Activated naive CD4-positive, alpha-beta T cell treated with anti-CD3 and anti-CD28 coated beads for 36 hours (primary cell): ENCODE measurements at regions of chr11 and their contacts with region 1.

Region 1: GRCh38 chr11:102416976-102417375 is 35.6 kb downstream of the TMEM123 start:
- DNase-seq: peak; percentile 38
- H3K4me3 Mint-ChIP-seq: peak overlapping the region; percentile 34
- H3K27ac Mint-ChIP-seq: peak overlapping the region; percentile 84
- H3K4me1 Mint-ChIP-seq: peaks cover 92% of the 10 kb centered on the region
- H3K27me3 Mint-ChIP-seq: no peaks in the 10 kb centered on the region

Region 2: GRCh38 chr11:102287964-102288724 is 128.8 kb before region 1 on chr11:
- CTCF ChIA-PET with region 1: no interaction called
- intact Hi-C with region 1: no loop called
- DNase-seq: peak; percentile 46
- H3K4me3 Mint-ChIP-seq: peak overlapping the region; percentile 50
- H3K27ac Mint-ChIP-seq: no peak overlapping the region
- H3K4me1 Mint-ChIP-seq: peaks cover 16% of the 10 kb centered on the region
- H3K27me3 Mint-ChIP-seq: no peaks in the 10 kb centered on the region

Region 3: DNA sequence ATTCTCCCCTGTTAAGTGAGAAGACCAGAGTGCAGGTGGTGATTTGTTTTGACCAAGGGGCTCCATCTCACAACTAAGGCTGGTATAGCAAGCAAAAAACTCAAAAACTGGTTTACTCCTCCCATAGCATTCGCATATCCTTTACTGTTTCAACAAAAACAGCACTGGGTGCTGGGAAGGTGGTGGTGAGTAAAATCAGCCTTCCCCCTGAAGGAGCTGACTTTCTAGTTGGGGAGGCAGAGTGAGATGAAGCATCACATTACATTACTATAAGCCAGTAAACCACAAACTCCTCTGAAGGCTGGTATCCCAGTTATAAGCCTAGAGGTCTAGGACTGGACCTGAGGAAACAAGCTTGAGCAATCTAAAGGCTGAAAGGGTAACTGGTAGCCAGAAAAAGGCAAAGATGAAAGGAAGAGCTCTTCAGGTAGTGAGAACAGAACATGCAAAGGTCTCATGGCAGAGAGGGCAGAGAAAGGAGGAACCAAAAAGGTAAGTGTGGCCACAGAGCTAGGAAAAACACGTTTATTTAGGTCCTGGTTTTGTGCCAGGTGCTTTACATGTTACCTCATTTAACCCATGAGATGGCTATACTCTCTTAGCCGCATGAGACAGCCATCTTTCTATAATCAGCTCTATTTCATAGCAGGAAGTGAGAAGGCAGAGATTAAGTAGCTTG is 13.3 kb after region 1 on chr11:
- CTCF ChIA-PET with region 1: interaction called, 6 read pairs
- intact Hi-C with region 1: loop called (anchors 1 kb)
- DNase-seq: peak; percentile 86
- H3K4me3 Mint-ChIP-seq: peak overlapping the region; percentile 44
- H3K27ac Mint-ChIP-seq: peak overlapping the region; percentile 95
- H3K4me1 Mint-ChIP-seq: peaks cover 75% of the 10 kb centered on the region
- H3K27me3 Mint-ChIP-seq: no peaks in the 10 kb centered on the region

Region 4: GRCh38 chr11:102457865-102458264 is 40.9 kb after region 1 on chr11:
- CTCF ChIA-PET with region 1: no interaction called
- intact Hi-C with region 1: loop called (anchors 1 kb)
- DNase-seq: no peak
- H3K4me3 Mint-ChIP-seq: peak overlapping the region; percentile 17
- H3K27ac Mint-ChIP-seq: peak overlapping the region; percentile 64
- H3K4me1 Mint-ChIP-seq: peaks cover 74% of the 10 kb centered on the region
- H3K27me3 Mint-ChIP-seq: no peaks in the 10 kb centered on the region